Calu3 (cell line): ENCODE measurements at regions of chr2 and their contacts with region 1.

Region 1: DNA sequence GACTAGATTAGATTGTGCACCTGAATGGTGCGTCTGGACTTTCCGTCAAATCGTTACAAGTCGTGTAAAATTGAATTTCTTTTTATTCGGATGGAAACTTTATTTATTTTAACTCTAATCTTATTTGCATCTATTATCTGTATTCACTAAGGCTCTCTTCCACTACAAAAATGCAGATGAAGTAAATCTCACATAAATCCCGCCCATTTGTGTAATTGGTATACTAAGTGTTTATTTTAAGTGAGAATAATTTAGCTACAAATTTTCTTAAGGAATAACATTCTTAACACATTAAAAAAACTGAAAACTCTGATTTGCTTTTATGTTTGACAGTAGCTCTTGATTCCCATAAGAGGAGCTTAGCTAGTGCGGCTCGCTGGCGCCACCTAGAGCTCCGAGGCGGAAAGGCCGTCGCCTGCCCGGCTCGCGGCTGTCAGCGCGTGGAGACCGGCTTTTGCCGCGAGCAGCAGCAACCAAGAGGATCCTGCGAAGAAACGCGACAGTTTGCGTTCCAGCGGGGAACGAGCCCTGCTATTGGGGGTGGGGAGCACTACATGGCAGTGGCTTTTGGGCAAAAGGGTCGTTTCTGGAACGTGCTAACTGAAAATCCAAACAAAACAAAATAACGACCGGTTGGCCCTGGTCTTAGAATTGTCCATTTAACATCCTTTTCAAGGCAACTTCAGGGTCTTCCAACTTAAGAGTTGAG is 6.7 kb downstream of the SP9 start:
- DNase-seq: peak; percentile 89
- H3K4me3 Mint-ChIP-seq: peak overlapping the region; percentile 62
- H3K27ac Mint-ChIP-seq: no peak overlapping the region
- H3K4me1 Mint-ChIP-seq: peaks cover 14% of the 10 kb centered on the region
- H3K27me3 Mint-ChIP-seq: peaks cover 73% of the 10 kb centered on the region
- CTCF ChIP-seq: peak; percentile 94

Region 2: DNA sequence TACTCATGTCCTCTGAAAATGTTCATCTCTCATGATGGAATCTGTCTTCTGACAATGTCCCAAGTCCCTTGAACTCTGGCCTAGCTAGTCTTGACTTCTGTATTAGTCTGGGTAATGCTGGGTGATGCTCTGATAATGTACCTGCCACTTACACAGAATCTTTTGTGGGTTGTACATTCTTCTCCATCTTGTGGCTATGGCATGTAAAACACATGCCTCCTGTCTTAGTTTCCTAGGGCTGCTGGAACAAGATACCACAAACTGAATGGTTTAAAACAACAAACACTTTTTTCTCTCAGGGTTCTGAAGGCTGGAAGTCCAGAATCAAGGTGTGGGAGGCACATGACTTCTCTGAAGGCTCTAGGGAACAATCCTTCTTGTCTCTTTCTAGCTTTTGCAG is 1548.7 kb before region 1 on chr2:
- CTCF ChIA-PET with region 1: no interaction called
- intact Hi-C with region 1: no loop called
- DNase-seq: no peak
- H3K4me3 Mint-ChIP-seq: no peak overlapping the region
- H3K27ac Mint-ChIP-seq: no peak overlapping the region
- H3K4me1 Mint-ChIP-seq: no peaks in the 10 kb centered on the region
- H3K27me3 Mint-ChIP-seq: peaks cover 41% of the 10 kb centered on the region
- CTCF ChIP-seq: no peak

Region 3: DNA sequence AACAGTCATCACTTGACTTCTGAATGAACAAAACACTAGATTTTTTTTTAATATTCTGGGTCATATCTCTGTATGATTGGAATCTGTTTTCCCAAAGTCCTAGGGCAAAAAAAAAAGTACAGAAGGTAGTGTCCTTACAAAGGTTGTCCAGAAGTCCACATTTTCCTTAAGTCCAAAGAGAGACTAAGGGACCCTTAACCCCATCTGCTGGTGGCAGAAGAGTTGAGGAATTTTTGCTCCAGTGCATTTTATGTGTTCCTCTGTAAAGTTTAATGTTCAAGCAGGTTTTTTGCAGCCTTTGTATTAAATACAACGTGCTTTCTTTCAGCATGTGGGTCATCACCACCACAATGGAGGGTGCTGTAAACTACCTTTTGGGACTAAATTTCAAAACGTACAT is 592.1 kb before region 1 on chr2:
- CTCF ChIA-PET with region 1: no interaction called
- intact Hi-C with region 1: loop called (anchors 10 kb)
- DNase-seq: no peak
- H3K4me3 Mint-ChIP-seq: no peak overlapping the region
- H3K27ac Mint-ChIP-seq: no peak overlapping the region
- H3K4me1 Mint-ChIP-seq: no peaks in the 10 kb centered on the region
- H3K27me3 Mint-ChIP-seq: no peaks in the 10 kb centered on the region
- CTCF ChIP-seq: no peak

Region 4: DNA sequence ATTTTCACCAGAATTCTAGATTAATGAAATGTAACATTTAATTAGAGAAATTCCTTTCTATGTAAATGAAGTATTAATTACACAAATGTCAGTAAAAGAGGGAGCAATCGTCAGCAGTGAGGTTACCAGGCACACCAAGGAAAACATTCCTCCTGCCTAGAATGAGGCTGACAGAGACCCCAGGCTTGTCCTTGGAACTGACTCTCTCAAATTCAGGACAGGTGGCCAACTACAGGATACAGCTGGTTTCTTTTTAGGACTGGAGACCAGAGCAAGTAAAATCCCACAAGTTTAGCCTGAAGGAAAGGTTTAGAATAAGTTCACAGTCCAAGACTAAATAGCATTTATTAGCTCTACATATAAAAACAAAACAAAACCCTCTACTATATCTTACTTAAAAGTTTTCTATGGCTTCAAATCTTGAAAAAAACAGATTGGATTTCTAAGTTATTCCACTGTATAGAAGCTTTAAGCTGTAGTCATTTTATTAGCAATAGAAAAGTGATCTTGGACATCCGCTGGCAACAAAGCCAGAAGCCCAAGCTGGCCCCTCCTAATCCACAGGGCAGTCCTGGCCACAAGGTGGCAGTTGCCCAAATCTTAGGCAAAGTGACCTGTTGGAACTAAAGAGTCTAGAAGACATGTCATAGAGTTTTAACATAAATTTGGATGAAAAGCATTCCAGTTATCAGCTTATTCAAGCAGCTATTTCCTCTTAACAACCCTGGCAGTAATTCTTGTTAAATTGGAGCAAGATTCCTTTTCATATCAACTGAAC is 457.2 kb before region 1 on chr2:
- CTCF ChIA-PET with region 1: interaction called, 8 read pairs
- intact Hi-C with region 1: loop called (anchors 10 kb)
- DNase-seq: peak; percentile 58
- H3K4me3 Mint-ChIP-seq: no peak overlapping the region
- H3K27ac Mint-ChIP-seq: no peak overlapping the region
- H3K4me1 Mint-ChIP-seq: no peaks in the 10 kb centered on the region
- H3K27me3 Mint-ChIP-seq: no peaks in the 10 kb centered on the region
- CTCF ChIP-seq: no peak

Region 5: DNA sequence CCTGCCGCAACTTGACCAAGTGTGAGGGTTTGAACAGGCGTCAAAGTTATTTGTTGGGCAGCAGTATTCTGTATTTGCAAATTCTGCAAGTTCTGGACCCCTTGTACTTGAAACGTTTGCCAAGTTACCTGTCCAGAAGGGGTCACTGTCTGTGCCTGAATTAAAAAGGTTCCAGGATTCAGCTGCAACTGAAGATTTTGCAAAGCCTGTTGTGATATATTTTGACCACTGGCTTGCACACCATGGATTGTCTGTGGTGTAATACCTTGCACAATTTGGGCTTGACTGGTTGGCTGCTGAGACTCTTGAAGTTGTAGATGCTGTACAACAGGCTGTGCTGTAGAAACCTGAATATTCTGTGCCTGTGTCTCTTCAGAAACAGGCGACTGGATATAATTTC is 386.4 kb before region 1 on chr2:
- CTCF ChIA-PET with region 1: no interaction called
- intact Hi-C with region 1: loop called (anchors 10 kb)
- DNase-seq: no peak
- H3K4me3 Mint-ChIP-seq: no peak overlapping the region
- H3K27ac Mint-ChIP-seq: no peak overlapping the region
- H3K4me1 Mint-ChIP-seq: peaks cover 57% of the 10 kb centered on the region
- H3K27me3 Mint-ChIP-seq: no peaks in the 10 kb centered on the region
- CTCF ChIP-seq: no peak

Region 6: DNA sequence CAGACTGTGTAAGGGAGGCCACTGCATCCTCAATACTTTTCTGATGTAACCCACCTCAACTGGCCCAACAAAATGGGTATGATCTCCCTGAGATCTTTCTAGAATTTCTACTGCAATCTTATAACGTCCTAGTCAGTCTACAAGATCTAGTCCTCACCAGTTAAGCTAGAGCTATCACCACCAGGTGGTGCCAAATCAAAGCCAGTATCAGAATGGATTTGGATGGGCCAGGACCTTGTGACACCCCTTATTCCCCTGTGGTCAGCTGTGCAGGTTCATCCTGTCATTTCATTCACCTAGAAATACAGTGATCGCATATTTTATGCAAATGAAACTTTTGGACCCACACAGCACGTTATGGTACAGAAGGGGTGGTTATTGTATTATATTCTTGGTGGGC is 183.4 kb before region 1 on chr2:
- CTCF ChIA-PET with region 1: interaction called, 34 read pairs
- intact Hi-C with region 1: loop called (anchors 1 kb)
- DNase-seq: peak; percentile 59
- H3K4me3 Mint-ChIP-seq: no peak overlapping the region
- H3K27ac Mint-ChIP-seq: no peak overlapping the region
- H3K4me1 Mint-ChIP-seq: peaks cover 8% of the 10 kb centered on the region
- H3K27me3 Mint-ChIP-seq: no peaks in the 10 kb centered on the region
- CTCF ChIP-seq: peak; percentile 84

Region 7: DNA sequence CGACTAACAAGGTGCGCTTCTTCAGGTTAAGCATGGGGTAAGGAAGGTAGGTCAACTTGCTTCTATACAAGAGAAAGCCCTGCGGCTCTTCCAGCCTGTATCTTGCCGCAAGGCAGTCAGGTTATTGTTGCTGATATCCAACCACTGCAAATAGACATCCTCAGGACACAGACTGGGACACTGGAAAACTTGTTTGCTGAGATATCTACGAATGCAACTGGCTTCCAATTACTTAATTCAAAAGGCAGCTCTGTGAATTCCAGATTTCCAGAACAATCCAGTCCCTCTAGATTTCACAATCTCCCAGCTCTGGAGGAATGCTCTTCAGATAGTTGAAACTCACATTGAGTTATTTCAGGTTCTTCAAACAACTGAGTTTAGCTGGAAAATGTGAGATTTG is 41.4 kb before region 1 on chr2:
- CTCF ChIA-PET with region 1: no interaction called
- intact Hi-C with region 1: no loop called
- DNase-seq: no peak
- H3K4me3 Mint-ChIP-seq: no peak overlapping the region
- H3K27ac Mint-ChIP-seq: no peak overlapping the region
- H3K4me1 Mint-ChIP-seq: no peaks in the 10 kb centered on the region
- H3K27me3 Mint-ChIP-seq: peaks cover 21% of the 10 kb centered on the region
- CTCF ChIP-seq: no peak